Activated naive CD4-positive, alpha-beta T cell treated with anti-CD3 and anti-CD28 coated beads for 36 hours (primary cell): ENCODE measurements at regions of chr2 and their contacts with region 1.

Region 1: DNA sequence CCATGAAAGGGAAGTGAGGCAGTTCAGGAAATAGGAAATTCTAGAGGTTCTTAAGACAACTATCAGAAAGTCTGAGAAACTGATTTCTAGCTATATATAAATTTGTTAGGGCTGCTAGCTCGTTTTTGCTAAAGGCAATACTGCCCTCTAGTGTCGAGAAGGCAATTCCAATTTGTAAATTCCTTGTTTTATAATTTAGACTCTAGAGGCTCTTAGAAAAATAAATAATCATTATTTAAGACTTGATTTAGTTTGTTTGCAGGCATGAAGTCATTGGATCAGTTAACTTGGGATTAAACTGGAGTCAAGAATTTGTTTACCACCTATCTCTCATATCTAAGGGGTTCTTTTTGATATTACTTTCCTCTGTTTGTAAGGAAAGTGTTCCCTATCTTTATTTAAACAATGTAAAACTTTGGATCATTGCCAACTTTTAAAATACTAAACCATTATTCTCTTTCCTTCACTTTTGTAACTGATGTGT is 66.2 kb downstream of the ACVR2A start:
- DNase-seq: peak; percentile 55
- H3K4me3 Mint-ChIP-seq: no peak overlapping the region
- H3K27ac Mint-ChIP-seq: no peak overlapping the region
- H3K4me1 Mint-ChIP-seq: peaks cover 3% of the 10 kb centered on the region
- H3K27me3 Mint-ChIP-seq: no peaks in the 10 kb centered on the region

Region 2: DNA sequence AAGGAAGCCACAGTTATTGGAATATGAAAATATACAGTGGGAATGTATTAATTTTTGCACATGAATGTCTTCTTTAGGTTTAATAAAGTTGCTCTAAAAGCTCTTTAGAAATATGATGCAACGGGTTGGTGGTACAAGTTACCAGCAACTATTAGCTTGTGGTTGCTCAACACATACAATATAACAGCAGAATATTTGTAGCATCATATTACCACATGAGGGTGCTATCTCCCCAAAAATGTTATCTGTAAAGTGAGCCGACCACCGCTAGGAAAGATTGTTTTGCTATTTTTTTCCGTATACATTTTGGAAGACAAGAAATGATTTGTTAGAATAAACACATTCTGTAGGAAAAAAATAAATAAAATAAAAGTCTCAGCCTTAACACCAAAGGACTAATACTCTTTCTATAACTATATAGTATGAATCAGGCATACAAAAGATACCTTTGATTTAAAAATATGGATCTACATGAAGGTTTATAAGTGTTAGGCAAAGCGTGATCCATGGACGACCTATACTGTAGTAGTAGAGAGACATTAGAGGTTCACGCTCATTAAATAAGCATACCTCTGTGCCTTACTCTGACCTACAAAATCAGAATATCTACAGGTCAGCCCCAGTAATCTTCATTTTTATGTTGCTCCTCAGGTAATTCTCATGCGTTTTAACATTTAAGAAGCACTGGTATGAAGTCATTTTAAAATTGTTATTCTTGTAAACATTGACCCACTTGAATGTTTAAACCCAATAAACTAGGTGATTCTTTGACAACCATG is 1176.8 kb before region 1 on chr2:
- CTCF ChIA-PET with region 1: no interaction called
- intact Hi-C with region 1: loop called (anchors 1 kb)
- DNase-seq: no peak
- H3K4me3 Mint-ChIP-seq: no peak overlapping the region
- H3K27ac Mint-ChIP-seq: no peak overlapping the region
- H3K4me1 Mint-ChIP-seq: no peaks in the 10 kb centered on the region
- H3K27me3 Mint-ChIP-seq: no peaks in the 10 kb centered on the region

Region 3: DNA sequence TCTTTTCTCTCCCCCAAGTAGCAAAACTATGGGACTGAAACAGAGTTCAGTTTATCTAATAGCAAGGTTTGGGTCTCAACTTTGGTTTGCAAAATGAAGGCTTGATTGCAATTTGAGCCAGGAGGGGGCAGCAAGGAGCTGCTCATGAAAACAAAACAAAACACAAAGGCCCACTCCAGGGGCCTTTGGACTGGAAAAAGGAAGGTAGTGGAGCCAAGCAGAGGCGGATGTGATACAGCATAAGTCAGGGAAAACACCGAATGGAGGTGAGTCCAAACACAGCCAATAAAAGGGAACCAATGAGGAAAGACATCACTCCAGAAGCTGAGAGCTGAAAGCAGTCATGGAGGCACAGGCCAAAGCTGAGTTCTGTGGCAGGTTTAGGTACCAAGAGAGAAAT is 865.9 kb before region 1 on chr2:
- CTCF ChIA-PET with region 1: interaction called, 24 read pairs
- intact Hi-C with region 1: loop called (anchors 1 kb)
- DNase-seq: peak; percentile 67
- H3K4me3 Mint-ChIP-seq: no peak overlapping the region
- H3K27ac Mint-ChIP-seq: no peak overlapping the region
- H3K4me1 Mint-ChIP-seq: peaks cover 4% of the 10 kb centered on the region
- H3K27me3 Mint-ChIP-seq: no peaks in the 10 kb centered on the region

Region 4: GRCh38 chr2:147288131-147288530 is 622.9 kb before region 1 on chr2:
- CTCF ChIA-PET with region 1: interaction called, 3 read pairs
- intact Hi-C with region 1: loop called (anchors 1 kb)
- DNase-seq: peak; percentile 45
- H3K4me3 Mint-ChIP-seq: no peak overlapping the region
- H3K27ac Mint-ChIP-seq: peak overlapping the region; percentile 78
- H3K4me1 Mint-ChIP-seq: peaks cover 24% of the 10 kb centered on the region
- H3K27me3 Mint-ChIP-seq: no peaks in the 10 kb centered on the region

Region 5: DNA sequence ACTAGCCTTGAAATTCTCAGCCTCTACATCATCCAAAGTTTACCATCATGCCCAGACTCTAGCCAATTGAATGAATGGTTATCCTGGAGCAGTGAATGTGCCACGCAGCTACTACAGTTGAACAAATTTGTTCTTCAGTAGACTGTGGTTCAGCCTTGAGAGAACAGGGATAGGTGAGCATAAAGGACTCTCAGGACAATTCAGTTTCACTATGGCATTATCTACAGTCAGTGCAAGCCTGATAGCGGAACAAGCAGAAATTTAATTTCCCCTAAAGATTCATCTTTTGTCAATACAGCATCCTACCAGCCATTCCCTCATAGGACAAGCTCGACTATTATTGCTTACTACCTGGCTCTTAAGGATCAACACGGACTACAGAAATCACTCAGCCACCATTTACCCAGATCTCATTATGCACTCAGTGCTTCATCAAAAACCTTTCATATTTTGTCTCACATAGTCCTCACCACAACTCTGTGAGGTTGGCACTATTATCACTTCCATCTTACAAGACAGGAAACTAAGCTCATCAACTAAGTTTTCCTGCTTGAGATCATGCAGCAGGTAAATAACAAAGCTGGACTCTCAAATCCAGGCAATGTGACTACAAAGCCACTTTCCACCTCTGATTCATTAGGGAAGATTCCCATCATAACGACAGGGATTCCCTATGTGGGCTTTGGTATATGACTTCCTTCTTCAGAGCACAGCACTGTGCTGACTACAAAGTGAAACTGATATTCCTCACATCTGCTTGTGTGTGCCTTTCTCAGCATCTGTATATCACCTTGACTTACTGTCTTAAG is 247.7 kb before region 1 on chr2:
- CTCF ChIA-PET with region 1: no interaction called
- intact Hi-C with region 1: loop called (anchors 5 kb)
- DNase-seq: peak; percentile 14
- H3K4me3 Mint-ChIP-seq: peak overlapping the region; percentile 26
- H3K27ac Mint-ChIP-seq: peak overlapping the region; percentile 84
- H3K4me1 Mint-ChIP-seq: peaks cover 24% of the 10 kb centered on the region
- H3K27me3 Mint-ChIP-seq: no peaks in the 10 kb centered on the region

Region 6: GRCh38 chr2:147806846-147807245 is 104.2 kb before region 1 on chr2:
- CTCF ChIA-PET with region 1: no interaction called
- intact Hi-C with region 1: no loop called
- DNase-seq: no peak
- H3K4me3 Mint-ChIP-seq: no peak overlapping the region
- H3K27ac Mint-ChIP-seq: no peak overlapping the region
- H3K4me1 Mint-ChIP-seq: peaks cover 5% of the 10 kb centered on the region
- H3K27me3 Mint-ChIP-seq: no peaks in the 10 kb centered on the region

Region 7: DNA sequence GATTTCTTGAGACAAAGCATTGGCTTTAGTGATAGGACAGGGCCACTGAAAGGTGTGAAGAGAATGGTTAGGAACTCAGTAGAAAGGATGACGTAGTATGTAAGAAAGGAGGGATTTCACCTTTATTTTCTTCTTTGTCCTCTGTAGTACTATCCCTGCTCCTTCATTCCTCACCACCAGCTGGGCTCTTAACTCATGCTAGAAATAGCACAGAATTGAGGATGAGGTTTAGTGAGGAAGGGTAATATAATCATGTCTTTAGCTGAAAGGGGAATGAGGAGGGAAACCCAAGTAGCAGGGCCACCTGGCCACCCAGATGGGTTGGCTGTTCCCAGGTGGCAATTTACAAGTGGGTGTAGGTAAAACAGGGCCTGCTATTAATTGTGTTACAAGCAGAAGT is 51.0 kb before region 1 on chr2:
- CTCF ChIA-PET with region 1: no interaction called
- intact Hi-C with region 1: no loop called
- DNase-seq: no peak
- H3K4me3 Mint-ChIP-seq: no peak overlapping the region
- H3K27ac Mint-ChIP-seq: no peak overlapping the region
- H3K4me1 Mint-ChIP-seq: peaks cover 35% of the 10 kb centered on the region
- H3K27me3 Mint-ChIP-seq: no peaks in the 10 kb centered on the region

Region 8: DNA sequence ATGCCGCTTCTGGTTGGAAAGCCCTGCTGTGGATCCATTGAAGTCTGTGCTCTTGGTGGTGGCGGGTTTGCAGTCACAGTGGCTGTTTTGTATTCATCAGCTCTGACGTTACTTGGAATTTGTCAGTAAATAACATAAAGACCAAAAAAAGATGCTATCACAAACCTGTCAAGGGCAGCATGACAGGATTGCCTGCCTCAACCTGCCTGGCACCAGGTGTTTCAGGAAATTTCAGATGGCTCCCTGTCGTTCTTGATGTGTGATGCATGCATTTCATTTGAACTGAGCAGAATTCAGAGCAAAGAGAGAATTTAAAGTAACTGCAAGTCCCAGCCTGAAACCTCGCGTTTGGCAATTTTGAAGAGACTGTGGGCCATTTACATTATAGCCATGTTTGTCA is 683.2 kb after region 1 on chr2:
- CTCF ChIA-PET with region 1: no interaction called
- intact Hi-C with region 1: no loop called
- DNase-seq: no peak
- H3K4me3 Mint-ChIP-seq: no peak overlapping the region
- H3K27ac Mint-ChIP-seq: no peak overlapping the region
- H3K4me1 Mint-ChIP-seq: no peaks in the 10 kb centered on the region
- H3K27me3 Mint-ChIP-seq: no peaks in the 10 kb centered on the region